WTC11 (cell line): ENCODE measurements at regions of chr7 and their contacts with region 1.

Region 1: DNA sequence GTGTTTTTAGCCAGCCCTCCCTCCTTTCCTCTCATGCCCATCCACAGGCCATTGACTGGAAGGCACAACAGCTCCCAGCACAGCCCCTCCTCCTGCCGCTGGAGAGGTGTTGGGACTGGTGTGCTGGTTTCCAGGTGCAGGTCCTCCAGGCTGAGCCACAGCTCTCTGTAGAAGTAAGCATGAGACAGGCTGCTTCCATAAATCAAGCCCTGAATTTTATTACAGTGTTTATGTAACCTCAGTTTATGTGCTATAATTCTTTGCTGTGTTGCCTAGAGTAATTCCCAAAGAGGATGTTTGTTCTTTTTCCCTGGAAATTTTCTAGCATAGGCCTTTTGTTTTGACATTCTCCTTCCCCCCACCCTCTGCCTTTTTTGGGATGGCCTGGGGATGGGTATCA is 445.8 kb downstream of the AUTS2 start:
- DNase-seq: peak; percentile 16
- ATAC-seq: peak; percentile 68
- H3K4me3 Mint-ChIP-seq: no peak overlapping the region
- H3K27ac Mint-ChIP-seq: no peak overlapping the region
- H3K4me1 Mint-ChIP-seq: peaks cover 13% of the 10 kb centered on the region
- H3K27me3 Mint-ChIP-seq: no peaks in the 10 kb centered on the region
- CTCF ChIP-seq: no peak

Region 2: GRCh38 chr7:69889338-69889975 is 154.6 kb before region 1 on chr7:
- CTCF ChIA-PET with region 1: no interaction called
- POLR2A ChIA-PET with region 1: interaction called, 11 read pairs
- DNase-seq: no peak
- ATAC-seq: no peak
- H3K4me3 Mint-ChIP-seq: no peak overlapping the region
- H3K27ac Mint-ChIP-seq: no peak overlapping the region
- H3K4me1 Mint-ChIP-seq: peaks cover 7% of the 10 kb centered on the region
- H3K27me3 Mint-ChIP-seq: no peaks in the 10 kb centered on the region
- CTCF ChIP-seq: no peak

Region 3: DNA sequence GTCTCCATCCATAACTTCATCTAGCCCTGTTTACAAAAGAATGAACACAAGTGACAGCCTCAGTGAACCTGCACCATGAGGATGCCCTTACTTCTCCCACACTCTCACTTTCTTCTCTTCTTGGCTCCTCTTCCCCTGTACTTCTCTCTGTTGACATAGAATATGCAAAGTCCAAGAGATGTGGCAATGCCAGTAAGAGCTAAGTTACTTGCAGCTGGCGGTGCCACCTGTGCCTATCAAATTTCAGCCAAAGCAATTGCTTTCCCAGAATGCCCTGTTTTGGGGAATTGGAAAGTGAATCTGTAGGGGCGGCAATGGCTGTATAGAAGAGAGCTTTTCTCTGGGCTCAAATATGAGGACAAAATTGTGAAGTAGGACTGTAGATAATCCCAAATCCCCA is 112.0 kb after region 1 on chr7:
- CTCF ChIA-PET with region 1: interaction called, 10 read pairs
- POLR2A ChIA-PET with region 1: no interaction called
- DNase-seq: no peak
- ATAC-seq: no peak
- H3K4me3 Mint-ChIP-seq: no peak overlapping the region
- H3K27ac Mint-ChIP-seq: no peak overlapping the region
- H3K4me1 Mint-ChIP-seq: peaks cover 12% of the 10 kb centered on the region
- H3K27me3 Mint-ChIP-seq: peaks cover 13% of the 10 kb centered on the region; the same call in 1 of the 2 replicates
- CTCF ChIP-seq: no peak